Naive thymus-derived CD4-positive, alpha-beta T cell (primary cell): ENCODE measurements at regions of chr4 and their contacts with region 1.

Region 1: GRCh38 chr4:153785910-153786721 is 2.8 kb downstream of the SFRP2 start:
- DNase-seq: peak in 1 of 9 donors; percentile 21
- ATAC-seq: no peak
- H3K4me3 ChIP-seq: no peak overlapping the region
- H3K4me3 Mint-ChIP-seq: no peak overlapping the region
- H3K27ac ChIP-seq: no peak overlapping the region
- H3K27ac Mint-ChIP-seq: no peak overlapping the region
- H3K4me1 ChIP-seq: peaks cover 0 to 20% of the 10 kb centered on the region in 2 donors
- H3K4me1 Mint-ChIP-seq: peaks cover 13 to 35% (median 24%) of the 10 kb centered on the region in 7 donors
- H3K27me3 ChIP-seq: peaks cover 7 to 15% of the 10 kb centered on the region in 2 donors
- H3K27me3 Mint-ChIP-seq: peaks cover 48 to 87% (median 61%) of the 10 kb centered on the region in 5 donors

Region 2: DNA sequence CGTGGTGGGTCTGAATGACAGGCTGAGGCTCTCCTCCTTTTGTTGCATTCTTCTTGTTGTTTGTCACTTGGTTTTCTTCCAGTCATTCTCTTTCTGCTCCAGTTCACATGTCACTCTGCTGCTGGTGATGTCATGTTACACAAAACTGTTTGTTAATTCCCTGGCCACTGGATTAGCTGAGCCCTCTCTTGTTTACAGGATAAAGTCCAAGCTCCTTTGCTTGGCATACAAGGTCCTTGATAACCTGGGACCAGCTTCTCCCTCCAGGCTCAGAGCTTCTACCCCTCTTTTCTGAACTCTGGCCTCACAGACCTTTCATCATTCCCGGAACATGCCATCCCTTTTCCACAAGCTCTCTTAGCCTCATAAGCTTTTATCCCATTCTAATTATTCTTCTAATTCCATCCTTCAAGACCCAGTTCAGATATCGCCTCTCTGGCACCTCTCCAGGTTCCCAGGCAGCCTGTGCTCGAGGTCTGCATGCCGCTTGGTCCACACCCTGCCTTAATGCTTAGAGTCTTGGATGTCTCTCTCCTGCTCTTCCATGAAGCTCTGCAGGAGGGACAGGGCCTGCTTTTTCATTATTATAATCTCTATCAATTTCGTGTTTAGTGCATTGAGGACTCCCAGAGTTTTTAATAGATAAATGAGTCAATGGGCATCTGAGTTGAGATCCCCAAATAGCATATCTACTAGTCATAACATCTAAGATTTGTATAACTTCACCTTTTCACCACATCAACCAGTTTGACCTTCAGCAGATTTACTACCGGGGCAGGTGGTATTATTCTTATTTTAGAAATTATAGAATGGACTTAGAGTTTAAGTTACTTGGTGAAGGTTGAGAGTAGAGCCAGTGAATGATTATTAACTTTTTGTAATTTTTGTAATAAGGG is 221.2 kb before region 1 on chr4:
- CTCF ChIA-PET with region 1: no interaction called
- POLR2A ChIA-PET with region 1: no interaction called
- intact Hi-C with region 1: no loop called
- DNase-seq: no peak
- ATAC-seq: no peak
- H3K4me3 ChIP-seq: no peak overlapping the region
- H3K4me3 Mint-ChIP-seq: peak overlapping the region in 2 of 10 donors; percentile 11 to 16
- H3K27ac ChIP-seq: peak overlapping the region; percentile 24
- H3K27ac Mint-ChIP-seq: peak overlapping the region in 8 of 9 donors; percentile 54 to 89 (median 77)
- H3K4me1 ChIP-seq: peaks cover 0 to 13% of the 10 kb centered on the region in 2 donors
- H3K4me1 Mint-ChIP-seq: peaks cover 34 to 86% (median 82%) of the 10 kb centered on the region in 7 donors
- H3K27me3 ChIP-seq: no peaks in the 10 kb centered on the region
- H3K27me3 Mint-ChIP-seq: no peaks in the 10 kb centered on the region

Region 3: GRCh38 chr4:154018659-154019058 is 232.5 kb after region 1 on chr4:
- CTCF ChIA-PET with region 1: interaction called, 8 read pairs
- POLR2A ChIA-PET with region 1: no interaction called
- intact Hi-C with region 1: loop called in 1 of 2 experiments (anchors 2 kb)
- DNase-seq: peak in 5 of 9 donors; percentile 10 to 22 (median 14)
- ATAC-seq: peak; percentile 34
- H3K4me3 ChIP-seq: no peak overlapping the region
- H3K4me3 Mint-ChIP-seq: no peak overlapping the region
- H3K27ac ChIP-seq: no peak overlapping the region
- H3K27ac Mint-ChIP-seq: peak overlapping the region in 1 of 9 donors; percentile 10
- H3K4me1 ChIP-seq: no peaks in the 10 kb centered on the region
- H3K4me1 Mint-ChIP-seq: no peaks in the 10 kb centered on the region
- H3K27me3 ChIP-seq: no peaks in the 10 kb centered on the region
- H3K27me3 Mint-ChIP-seq: peaks cover 0 to 11% (median 8%) of the 10 kb centered on the region in 5 donors

Region 4: GRCh38 chr4:154049457-154050181 is 263.5 kb after region 1 on chr4:
- CTCF ChIA-PET with region 1: interaction called, 3 read pairs
- POLR2A ChIA-PET with region 1: no interaction called
- intact Hi-C with region 1: loop called in 1 of 2 experiments (anchors 10 kb)
- DNase-seq: no peak
- ATAC-seq: no peak
- H3K4me3 ChIP-seq: no peak overlapping the region
- H3K4me3 Mint-ChIP-seq: no peak overlapping the region
- H3K27ac ChIP-seq: no peak overlapping the region
- H3K27ac Mint-ChIP-seq: no peak overlapping the region
- H3K4me1 ChIP-seq: no peaks in the 10 kb centered on the region
- H3K4me1 Mint-ChIP-seq: no peaks in the 10 kb centered on the region
- H3K27me3 ChIP-seq: no peaks in the 10 kb centered on the region
- H3K27me3 Mint-ChIP-seq: peaks cover 0 to 10% (median 6%) of the 10 kb centered on the region in 5 donors

Region 5: GRCh38 chr4:154164931-154165839 is 379.1 kb after region 1 on chr4:
- CTCF ChIA-PET with region 1: no interaction called
- POLR2A ChIA-PET with region 1: no interaction called
- intact Hi-C with region 1: no loop called
- DNase-seq: no peak
- ATAC-seq: no peak
- H3K4me3 ChIP-seq: no peak overlapping the region
- H3K4me3 Mint-ChIP-seq: no peak overlapping the region
- H3K27ac ChIP-seq: no peak overlapping the region
- H3K27ac Mint-ChIP-seq: no peak overlapping the region
- H3K4me1 ChIP-seq: no peaks in the 10 kb centered on the region
- H3K4me1 Mint-ChIP-seq: no peaks in the 10 kb centered on the region
- H3K27me3 ChIP-seq: peaks cover 3 to 4% of the 10 kb centered on the region in 2 donors
- H3K27me3 Mint-ChIP-seq: peaks cover 0 to 15% (median 9%) of the 10 kb centered on the region in 5 donors

Region 6: GRCh38 chr4:154349829-154350228 is 563.7 kb after region 1 on chr4:
- CTCF ChIA-PET with region 1: interaction called, 3 read pairs
- POLR2A ChIA-PET with region 1: no interaction called
- intact Hi-C with region 1: loop called in 1 of 2 experiments (anchors 1 kb)
- DNase-seq: peak in 2 of 9 donors; percentile 5 to 19
- ATAC-seq: no peak
- H3K4me3 ChIP-seq: no peak overlapping the region
- H3K4me3 Mint-ChIP-seq: no peak overlapping the region
- H3K27ac ChIP-seq: no peak overlapping the region
- H3K27ac Mint-ChIP-seq: no peak overlapping the region
- H3K4me1 ChIP-seq: no peaks in the 10 kb centered on the region
- H3K4me1 Mint-ChIP-seq: no peaks in the 10 kb centered on the region
- H3K27me3 ChIP-seq: no peaks in the 10 kb centered on the region
- H3K27me3 Mint-ChIP-seq: peaks cover 5 to 35% (median 21%) of the 10 kb centered on the region in 5 donors

Region 7: GRCh38 chr4:154618708-154619315 is 832.7 kb after region 1 on chr4:
- CTCF ChIA-PET with region 1: no interaction called
- POLR2A ChIA-PET with region 1: no interaction called
- intact Hi-C with region 1: loop called in 1 of 2 experiments (anchors 5 kb)
- DNase-seq: peak in 7 of 9 donors; percentile 25 to 51 (median 39)
- ATAC-seq: peak; percentile 76
- H3K4me3 ChIP-seq: no peak overlapping the region
- H3K4me3 Mint-ChIP-seq: no peak overlapping the region
- H3K27ac ChIP-seq: no peak overlapping the region
- H3K27ac Mint-ChIP-seq: peak overlapping the region in 1 of 9 donors; percentile 21
- H3K4me1 ChIP-seq: no peaks in the 10 kb centered on the region
- H3K4me1 Mint-ChIP-seq: peaks cover 0 to 18% (median 5%) of the 10 kb centered on the region in 7 donors
- H3K27me3 ChIP-seq: no peaks in the 10 kb centered on the region
- H3K27me3 Mint-ChIP-seq: peaks cover 0 to 23% (median 4%) of the 10 kb centered on the region in 5 donors